ENCODE measurements at regions of chr12 and their contacts with region 1.

Region 1: DNA sequence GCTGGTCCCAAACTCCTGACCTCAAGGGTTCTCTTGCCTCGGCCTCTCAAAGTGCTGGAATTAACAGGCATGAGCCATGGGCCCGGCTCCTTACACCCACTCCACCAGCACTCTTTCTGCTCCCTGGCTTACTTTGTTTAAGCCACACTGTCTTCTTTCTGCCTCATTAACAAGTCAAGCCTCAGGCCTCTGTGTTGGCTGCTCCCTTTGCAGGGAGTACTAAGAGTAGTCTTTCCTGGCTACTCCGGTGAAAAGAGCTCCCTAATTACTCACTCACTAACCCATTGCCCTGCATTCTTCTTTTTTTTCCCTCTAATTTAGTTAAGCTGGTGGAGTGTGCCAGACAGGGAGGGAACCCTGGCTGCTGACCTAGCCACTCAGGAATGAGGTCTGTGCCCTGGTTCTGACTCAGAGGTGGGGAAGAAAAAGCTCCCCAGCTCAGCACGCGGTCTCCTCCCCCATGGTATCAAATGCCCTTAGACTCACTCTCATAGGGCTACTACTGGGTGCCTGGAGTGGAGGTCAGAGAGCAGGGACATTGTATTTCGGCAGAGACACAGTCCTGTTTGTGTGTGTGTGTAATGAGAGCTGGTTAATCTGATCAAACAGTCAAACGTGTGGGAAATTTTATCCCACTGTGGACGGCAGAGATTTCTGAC is 19.8 kb downstream of the GALNT6 start:
- DNase-seq: peak; percentile 96
- H3K4me3 Mint-ChIP-seq: peak overlapping the region; percentile 10
- H3K27ac Mint-ChIP-seq: peak overlapping the region; percentile 80
- H3K4me1 Mint-ChIP-seq: peaks cover 21% of the 10 kb centered on the region
- H3K27me3 Mint-ChIP-seq: no peaks in the 10 kb centered on the region
- CTCF ChIP-seq: no peak

Region 2: GRCh38 chr12:51381226-51382079 is 10.0 kb after region 1 on chr12:
- CTCF ChIA-PET with region 1: interaction called, 6 read pairs
- POLR2A ChIA-PET with region 1: interaction called, 54 read pairs
- intact Hi-C with region 1: no loop called
- DNase-seq: no peak
- H3K4me3 Mint-ChIP-seq: no peak overlapping the region
- H3K27ac Mint-ChIP-seq: no peak overlapping the region
- H3K4me1 Mint-ChIP-seq: peaks cover 15% of the 10 kb centered on the region
- H3K27me3 Mint-ChIP-seq: no peaks in the 10 kb centered on the region
- CTCF ChIP-seq: no peak

Region 3: DNA sequence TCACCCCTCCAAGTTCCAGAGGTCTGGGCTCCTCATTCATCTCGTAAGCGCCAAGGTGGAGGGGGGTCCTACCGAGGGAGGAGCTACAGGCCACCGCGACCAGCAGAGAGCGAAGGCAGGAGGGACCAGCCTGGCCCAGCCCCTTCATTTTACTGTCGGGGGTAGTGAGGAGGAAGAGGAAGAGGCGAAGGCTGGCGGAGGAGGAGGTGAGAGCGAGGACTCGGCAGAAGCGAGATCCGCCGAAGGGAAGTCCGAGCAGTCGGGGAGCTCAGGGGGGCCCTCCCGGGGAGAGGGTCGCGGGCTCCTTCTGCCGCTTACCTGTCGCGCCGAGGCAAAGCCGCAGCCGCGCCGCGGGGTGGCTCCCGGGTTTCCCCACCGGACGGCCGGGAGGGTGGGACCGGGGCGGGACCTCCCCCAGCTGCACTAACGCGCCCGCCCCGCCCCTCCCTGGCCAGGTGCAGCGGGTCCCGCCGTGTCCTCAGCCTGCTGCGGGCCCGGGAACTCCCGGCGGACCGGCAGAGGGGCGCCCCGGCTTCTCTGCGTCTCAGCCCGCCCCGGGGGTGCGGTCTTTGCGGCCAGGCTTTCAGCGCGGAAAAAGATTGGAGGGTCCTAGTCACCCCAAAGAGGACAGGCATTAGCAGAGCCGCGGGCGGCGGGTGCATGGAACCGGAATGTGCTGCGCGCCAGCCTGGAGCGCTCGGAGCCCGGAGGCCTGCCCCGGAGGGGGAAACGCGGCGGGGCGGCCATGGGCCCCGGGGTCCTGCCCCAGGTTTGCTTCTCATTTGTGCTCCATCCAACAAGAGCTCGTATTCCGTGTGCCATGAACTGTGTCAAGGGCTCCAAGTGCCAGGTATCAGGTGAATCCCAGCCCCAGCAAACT is 20.1 kb after region 1 on chr12 and contains the start of gene GALNT6:
- CTCF ChIA-PET with region 1: interaction called, 6 read pairs
- POLR2A ChIA-PET with region 1: interaction called, 54 read pairs
- intact Hi-C with region 1: no loop called
- DNase-seq: peak; percentile 58
- H3K4me3 Mint-ChIP-seq: peak within 1 kb of the TSS; percentile 95
- H3K27ac Mint-ChIP-seq: peak within 1 kb of the TSS; percentile 95
- H3K4me1 Mint-ChIP-seq: peaks cover 57% of the 10 kb centered on the region
- H3K27me3 Mint-ChIP-seq: no peaks in the 10 kb centered on the region
- CTCF ChIP-seq: no peak
- total RNA-seq, gene GALNT6: 24.8 and 27.6 TPM in 2 replicates

Measured in MCF 10A (cell line).